ENCODE measurements at regions of chr1 and their contacts with region 1.

Region 1: GRCh38 chr1:185291652-185292051 is 25.4 kb downstream of the IVNS1ABP start:
- DNase-seq: no peak
- H3K4me3 ChIP-seq: no peak overlapping the region
- H3K27ac ChIP-seq: no peak overlapping the region
- H3K4me1 ChIP-seq: no peaks in the 10 kb centered on the region
- H3K27me3 ChIP-seq: no peaks in the 10 kb centered on the region
- CTCF ChIP-seq: no peak
- POLR2A ChIP-seq: no peak

Region 2: GRCh38 chr1:185670187-185670627 is 378.6 kb after region 1 on chr1:
- intact Hi-C with region 1: loop called (anchors 10 kb)
- DNase-seq: no peak
- H3K4me3 ChIP-seq: no peak overlapping the region
- H3K27ac ChIP-seq: no peak overlapping the region
- H3K4me1 ChIP-seq: peaks cover 0 to 4% (median 0%) of the 10 kb centered on the region in 3 donors
- H3K27me3 ChIP-seq: no peaks in the 10 kb centered on the region
- CTCF ChIP-seq: peak in 5 of 6 experiments; percentile 32 to 54 (median 41)
- POLR2A ChIP-seq: no peak